Breast epithelium (tissue), 4 donors: ENCODE measurements at regions of chr12 and their contacts with region 1.

Region 1: DNA sequence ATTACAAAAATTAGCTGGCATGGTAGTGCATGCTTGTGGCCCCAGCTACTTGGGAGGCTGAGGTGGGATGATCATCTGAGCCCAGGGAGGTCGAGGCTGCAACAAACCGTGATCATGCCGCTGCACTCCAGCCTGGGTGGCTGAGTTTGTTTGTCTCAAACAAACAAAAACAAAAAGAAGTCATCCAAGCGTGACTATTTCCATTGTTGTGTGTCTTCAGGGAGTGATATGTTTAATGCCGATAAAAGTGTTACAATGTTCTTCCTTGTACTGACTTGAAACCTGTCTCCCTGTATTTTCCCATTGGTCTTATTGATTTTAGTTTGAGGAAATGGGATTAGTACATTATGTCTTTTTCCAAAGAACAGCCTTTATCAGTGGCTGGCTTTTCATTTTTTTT is 75.6 kb upstream of the USP44 start:
- DNase-seq: no peak
- H3K4me3 ChIP-seq: no peak overlapping the region
- H3K27ac ChIP-seq: no peak overlapping the region
- H3K4me1 ChIP-seq: no peaks in the 10 kb centered on the region
- H3K27me3 ChIP-seq: no peaks in the 10 kb centered on the region
- CTCF ChIP-seq: no peak
- POLR2A ChIP-seq: no peak

Region 2: GRCh38 chr12:94805749-94806529 is 820.9 kb before region 1 on chr12:
- intact Hi-C with region 1: loop called (anchors 5 kb)
- DNase-seq: no peak
- H3K4me3 ChIP-seq: no peak overlapping the region
- H3K27ac ChIP-seq: no peak overlapping the region
- H3K4me1 ChIP-seq: no peaks in the 10 kb centered on the region
- H3K27me3 ChIP-seq: no peaks in the 10 kb centered on the region
- CTCF ChIP-seq: no peak
- POLR2A ChIP-seq: no peak